Gastrocnemius medialis (tissue), 4 donors: ENCODE measurements at regions of chr18 and their contacts with region 1.

Region 1: GRCh38 chr18:79679111-79679872 is at the start of gene CTDP1:
- DNase-seq: peak; percentile 99
- ATAC-seq: peak; percentile 93 to 96
- H3K4me3 ChIP-seq: peak within 1 kb of the TSS; percentile 64 to 90 (median 80)
- H3K27ac ChIP-seq: peak within 1 kb of the TSS; percentile 94 to 99 (median 96)
- H3K4me1 ChIP-seq: peaks cover 29% of the 10 kb centered on the region in 2 donors
- H3K27me3 ChIP-seq: no peaks in the 10 kb centered on the region
- CTCF ChIP-seq: peak in 2 of 5 experiments; percentile 38 to 45
- POLR2A ChIP-seq: peak; percentile 77 to 78
- total RNA-seq, gene CTDP1: 12.3 to 21.8 (median 16.5) TPM

Region 2: DNA sequence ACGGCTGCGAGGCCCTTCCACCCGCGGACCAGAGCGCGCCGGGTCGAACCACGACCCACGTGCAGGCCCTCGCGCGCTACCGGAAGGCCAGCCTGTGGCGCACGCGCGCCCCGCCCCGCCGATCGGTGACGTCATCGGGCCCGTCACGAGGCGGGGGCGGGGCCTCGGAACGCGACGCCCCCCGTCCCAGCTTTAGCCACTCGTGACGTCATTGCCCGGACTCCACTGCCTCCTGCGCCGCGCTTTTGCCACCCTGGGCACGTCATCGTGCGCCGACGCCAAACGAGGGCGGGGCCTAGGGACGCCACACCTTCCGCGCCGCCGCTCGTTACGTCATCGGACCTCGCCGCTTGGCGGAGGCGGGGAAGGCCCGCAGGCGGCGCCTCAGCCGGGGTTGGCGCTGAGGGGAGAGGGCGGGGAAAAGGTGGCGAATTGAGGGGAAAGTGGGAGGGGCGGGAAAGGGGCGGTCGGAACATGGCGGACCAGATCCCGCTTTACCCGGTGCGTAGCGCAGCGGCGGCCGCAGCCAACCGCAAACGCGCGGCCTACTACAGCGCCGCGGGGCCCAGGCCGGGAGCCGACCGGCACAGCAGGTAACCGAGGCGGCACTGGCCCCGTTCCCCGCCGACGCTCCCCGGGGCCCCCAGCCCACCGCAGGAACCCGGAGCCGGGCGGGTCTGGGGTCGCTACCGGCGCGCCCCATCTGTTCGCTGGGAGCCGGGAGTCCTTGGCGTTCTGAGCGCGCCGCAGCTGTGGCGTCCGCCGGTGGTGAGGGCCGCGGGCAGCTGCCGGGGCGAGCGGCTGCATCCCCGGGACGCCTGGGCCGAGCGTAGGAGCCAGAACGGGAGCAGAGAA is 610.1 kb before region 1 on chr18 and contains the start of gene ATP9B:
- in situ Hi-C with region 1: no loop called
- intact Hi-C with region 1: loop called (anchors 1 kb)
- DNase-seq: peak; percentile 93 to 96
- ATAC-seq: peak; percentile 94 to 98
- H3K4me3 ChIP-seq: peak within 1 kb of the TSS; percentile 62 to 89 (median 80)
- H3K27ac ChIP-seq: peak within 1 kb of the TSS; percentile 88 to 95 (median 92)
- H3K4me1 ChIP-seq: peaks cover 20% of the 10 kb centered on the region in 2 donors
- H3K27me3 ChIP-seq: no peaks in the 10 kb centered on the region
- CTCF ChIP-seq: peak in 3 of 5 experiments; percentile 23 to 33 (median 23)
- POLR2A ChIP-seq: peak; percentile 59 to 72
- total RNA-seq, gene ATP9B: 9.9 to 33.6 (median 18.6) TPM

Region 3: GRCh38 chr18:79393635-79394533 is 285.4 kb before region 1 on chr18:
- in situ Hi-C with region 1: no loop called
- intact Hi-C with region 1: loop called (anchors 2 kb)
- DNase-seq: peak; percentile 57 to 77
- ATAC-seq: peak; percentile 72 to 75
- H3K4me3 ChIP-seq: peak overlapping the region; percentile 65 to 76 (median 68)
- H3K27ac ChIP-seq: peak overlapping the region; percentile 93 to 97 (median 96)
- H3K4me1 ChIP-seq: peaks cover 19 to 22% of the 10 kb centered on the region in 2 donors
- H3K27me3 ChIP-seq: no peaks in the 10 kb centered on the region
- CTCF ChIP-seq: no peak
- POLR2A ChIP-seq: peak; percentile 79 to 94

Region 4: GRCh38 chr18:79439201-79440023 is 239.9 kb before region 1 on chr18:
- in situ Hi-C with region 1: no loop called
- intact Hi-C with region 1: loop called (anchors 1 kb)
- DNase-seq: peak; percentile 71 to 86
- ATAC-seq: peak; percentile 85 to 86
- H3K4me3 ChIP-seq: peak overlapping the region; percentile 9 to 34 (median 24)
- H3K27ac ChIP-seq: peak overlapping the region; percentile 81 to 86 (median 84)
- H3K4me1 ChIP-seq: peaks cover 26 to 51% of the 10 kb centered on the region in 2 donors
- H3K27me3 ChIP-seq: no peaks in the 10 kb centered on the region
- CTCF ChIP-seq: no peak
- POLR2A ChIP-seq: peak in 1 of 2 donors; percentile 26

Region 5: DNA sequence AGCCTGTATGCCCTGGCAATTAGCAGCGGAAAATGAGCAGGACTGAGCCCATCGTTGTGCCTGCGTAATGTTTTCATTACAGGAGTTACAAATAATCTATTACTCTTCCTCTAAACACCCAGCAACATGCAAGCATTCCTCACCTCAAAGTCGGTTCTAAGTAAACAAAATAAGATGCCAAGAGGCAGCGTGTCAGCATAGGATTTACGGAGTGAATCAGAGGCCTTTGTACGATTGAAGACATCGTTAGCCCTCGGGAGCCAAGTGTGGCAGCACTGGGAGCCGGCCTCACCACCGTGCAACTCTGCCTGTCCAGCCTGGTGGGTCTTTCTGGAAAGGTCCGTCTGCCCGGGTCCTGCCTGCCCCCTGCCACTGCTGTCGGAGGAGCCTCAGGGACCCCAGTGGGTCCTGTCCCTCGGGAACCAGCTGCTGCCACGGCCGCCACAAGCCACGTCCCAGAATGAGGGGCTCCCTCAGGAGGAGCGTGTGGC is 79.8 kb before region 1 on chr18:
- in situ Hi-C with region 1: no loop called
- intact Hi-C with region 1: no loop called
- DNase-seq: no peak
- ATAC-seq: no peak
- H3K4me3 ChIP-seq: no peak overlapping the region
- H3K27ac ChIP-seq: no peak overlapping the region
- H3K4me1 ChIP-seq: no peaks in the 10 kb centered on the region
- H3K27me3 ChIP-seq: peaks cover 2 to 12% (median 9%) of the 10 kb centered on the region in 3 donors
- CTCF ChIP-seq: no peak
- POLR2A ChIP-seq: no peak

Region 6: GRCh38 chr18:79644006-79644665 is 35.2 kb before region 1 on chr18:
- in situ Hi-C with region 1: no loop called
- intact Hi-C with region 1: no loop called
- DNase-seq: peak in 1 of 2 donors; percentile 26
- ATAC-seq: peak; percentile 44 to 65
- H3K4me3 ChIP-seq: no peak overlapping the region
- H3K27ac ChIP-seq: no peak overlapping the region
- H3K4me1 ChIP-seq: peaks cover 0 to 4% of the 10 kb centered on the region in 2 donors
- H3K27me3 ChIP-seq: no peaks in the 10 kb centered on the region
- CTCF ChIP-seq: peak; percentile 83 to 97 (median 91)
- POLR2A ChIP-seq: no peak

Region 7: DNA sequence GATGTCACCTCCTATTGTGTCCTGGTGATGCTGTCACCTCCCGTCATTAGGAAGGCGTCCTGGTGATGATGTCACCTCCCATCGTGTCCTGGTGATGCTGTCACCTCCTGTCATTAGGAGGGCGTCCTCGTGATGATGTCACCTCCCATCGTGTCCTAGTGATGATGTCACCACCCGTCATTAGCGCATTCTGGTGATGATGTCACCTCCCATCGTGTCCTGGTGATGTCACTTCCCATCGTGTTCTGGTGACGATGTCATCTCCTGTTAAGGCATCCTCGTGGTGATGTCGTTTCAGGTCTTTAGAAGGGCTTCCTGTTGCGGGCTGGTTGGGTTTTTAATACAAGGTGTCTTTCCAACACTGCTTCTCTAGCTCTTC is 41.1 kb after region 1 on chr18:
- in situ Hi-C with region 1: no loop called
- intact Hi-C with region 1: loop called (anchors 5 kb)
- DNase-seq: no peak
- ATAC-seq: no peak
- H3K4me3 ChIP-seq: no peak overlapping the region
- H3K27ac ChIP-seq: no peak overlapping the region
- H3K4me1 ChIP-seq: no peaks in the 10 kb centered on the region
- H3K27me3 ChIP-seq: no peaks in the 10 kb centered on the region
- CTCF ChIP-seq: no peak
- POLR2A ChIP-seq: no peak

Region 8: GRCh38 chr18:79988451-79989194 is 309.3 kb after region 1 on chr18 and contains the start of gene TXNL4A:
- in situ Hi-C with region 1: no loop called
- intact Hi-C with region 1: loop called (anchors 5 kb)
- DNase-seq: peak; percentile 70 to 84
- ATAC-seq: peak; percentile 96 to 98
- H3K4me3 ChIP-seq: peak within 1 kb of the TSS; percentile 84 to 99 (median 89)
- H3K27ac ChIP-seq: peak within 1 kb of the TSS; percentile 94 to 100 (median 96)
- H3K4me1 ChIP-seq: peaks cover 15 to 23% of the 10 kb centered on the region in 2 donors
- H3K27me3 ChIP-seq: no peaks in the 10 kb centered on the region
- CTCF ChIP-seq: no peak
- POLR2A ChIP-seq: peak; percentile 81 to 93
- total RNA-seq, gene TXNL4A: 39.9 to 105 (median 66.4) TPM

Region 9: DNA sequence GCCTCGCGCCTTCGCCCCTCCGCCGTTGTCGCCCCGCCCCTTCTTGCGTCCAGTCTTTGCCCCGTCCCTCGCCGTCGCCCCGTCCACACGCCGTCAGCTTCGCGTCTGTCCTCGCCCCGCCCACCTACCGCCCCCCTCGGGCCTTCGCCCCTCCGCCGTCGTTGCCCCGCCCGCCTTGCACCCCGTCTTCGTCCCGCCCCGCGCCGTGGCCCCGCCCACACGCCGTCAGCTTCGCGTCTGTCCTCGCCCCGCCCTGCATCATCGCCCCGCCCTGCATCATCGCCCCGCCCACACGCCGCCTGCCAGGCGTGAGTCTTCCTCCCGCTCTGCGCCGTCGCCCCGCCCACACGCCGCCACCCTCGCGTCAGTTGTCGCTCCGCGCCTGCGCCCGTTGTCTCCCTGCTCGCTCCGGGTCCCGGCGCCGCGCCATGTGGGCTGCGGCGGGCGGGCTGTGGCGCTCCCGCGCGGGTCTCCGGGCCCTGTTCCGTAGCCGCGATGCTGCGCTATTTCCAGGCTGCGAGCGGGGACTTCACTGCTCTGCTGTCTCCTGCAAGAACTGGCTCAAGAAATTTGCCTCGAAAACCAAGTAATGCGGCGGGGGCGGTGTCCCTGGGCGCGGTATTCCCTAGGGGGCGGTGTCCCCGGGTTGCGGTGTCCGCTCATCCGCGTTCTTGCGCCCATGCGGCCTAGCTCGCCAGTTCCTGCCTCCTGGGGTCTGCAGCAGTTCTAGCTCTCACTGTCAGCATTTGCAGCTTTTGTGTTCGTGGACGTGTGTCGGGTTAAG is 355.0 kb after region 1 on chr18 and contains the start of gene RBFA:
- in situ Hi-C with region 1: no loop called
- intact Hi-C with region 1: loop called (anchors 1 kb)
- DNase-seq: peak; percentile 98 to 99
- ATAC-seq: peak; percentile 86 to 87
- H3K4me3 ChIP-seq: peak within 1 kb of the TSS; percentile 71 to 100 (median 88)
- H3K27ac ChIP-seq: peak within 1 kb of the TSS; percentile 82 to 94 (median 87)
- H3K4me1 ChIP-seq: peaks cover 12 to 16% of the 10 kb centered on the region in 2 donors
- H3K27me3 ChIP-seq: no peaks in the 10 kb centered on the region
- CTCF ChIP-seq: peak in 3 of 5 experiments; percentile 56 to 70 (median 64)
- POLR2A ChIP-seq: peak; percentile 72 to 74
- total RNA-seq, gene RBFA: 26.6 to 37.4 (median 32.3) TPM